ENCODE measurements at regions of chr3 and their contacts with region 1.

Region 1: GRCh38 chr3:176663837-176664831 is 533.1 kb downstream of the TBL1XR1 start:
- DNase-seq: no peak
- H3K4me3 ChIP-seq: no peak overlapping the region
- H3K27ac ChIP-seq: no peak overlapping the region
- H3K4me1 ChIP-seq: peaks cover 0 to 4% (median 0%) of the 10 kb centered on the region in 4 experiments; a peak in 2 of 7 replicates
- H3K27me3 ChIP-seq: no peaks in the 10 kb centered on the region
- CTCF ChIP-seq: peak in 2 of 3 experiments; percentile 7 to 33; a peak in 2 of 4 replicates
- EP300 ChIP-seq: no peak
- POLR2A ChIP-seq: no peak
- RAD21 ChIP-seq: peak; percentile 70 to 72

Region 2: DNA sequence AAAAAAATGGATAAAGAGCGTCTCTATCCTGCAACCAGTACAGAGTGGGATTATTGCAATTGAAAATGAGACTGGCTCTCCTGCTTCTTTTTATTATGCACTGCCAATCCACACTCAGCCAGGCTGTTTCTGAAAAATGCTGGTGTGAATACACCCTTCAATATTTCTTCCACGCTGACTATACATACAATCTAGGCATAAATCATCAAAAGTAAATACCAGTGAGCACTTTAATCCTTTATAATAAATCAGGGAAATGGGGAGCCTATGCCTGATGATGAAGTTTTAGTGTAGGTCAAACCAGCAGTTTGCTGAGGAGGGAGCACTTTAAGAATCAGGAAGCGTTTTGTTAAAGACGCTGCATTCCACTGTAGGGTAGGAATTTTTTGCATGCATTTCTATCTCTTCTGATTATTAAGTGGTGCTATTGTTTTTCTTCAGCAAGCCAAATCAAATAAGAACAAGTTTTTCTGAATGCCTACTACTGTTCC is 248.4 kb before region 1 on chr3:
- CTCF ChIA-PET with region 1: no interaction called
- POLR2A ChIA-PET with region 1: no interaction called
- DNase-seq: no peak
- H3K4me3 ChIP-seq: no peak overlapping the region
- H3K27ac ChIP-seq: no peak overlapping the region
- H3K4me1 ChIP-seq: peaks cover 0 to 5% (median 3%) of the 10 kb centered on the region in 4 experiments; a peak in 2 of 7 replicates
- H3K27me3 ChIP-seq: no peaks in the 10 kb centered on the region
- CTCF ChIP-seq: no peak
- EP300 ChIP-seq: no peak
- POLR2A ChIP-seq: no peak
- RAD21 ChIP-seq: no peak

Region 3: GRCh38 chr3:176514297-176514696 is 149.8 kb before region 1 on chr3:
- CTCF ChIA-PET with region 1: interaction called, 37 read pairs
- POLR2A ChIA-PET with region 1: no interaction called
- DNase-seq: peak; percentile 47 to 80
- H3K4me3 ChIP-seq: no peak overlapping the region
- H3K27ac ChIP-seq: no peak overlapping the region
- H3K4me1 ChIP-seq: peaks cover 0 to 7% (median 0%) of the 10 kb centered on the region in 4 experiments; a peak in 1 of 7 replicates
- H3K27me3 ChIP-seq: no peaks in the 10 kb centered on the region
- CTCF ChIP-seq: peak; percentile 45 to 81 (median 69)
- EP300 ChIP-seq: no peak
- POLR2A ChIP-seq: no peak
- RAD21 ChIP-seq: peak; percentile 97 to 98

Region 4: GRCh38 chr3:176650478-176650877 is 13.7 kb before region 1 on chr3:
- CTCF ChIA-PET with region 1: interaction called, 11 read pairs
- POLR2A ChIA-PET with region 1: no interaction called
- DNase-seq: no peak
- H3K4me3 ChIP-seq: no peak overlapping the region
- H3K27ac ChIP-seq: no peak overlapping the region
- H3K4me1 ChIP-seq: no peaks in the 10 kb centered on the region
- H3K27me3 ChIP-seq: no peaks in the 10 kb centered on the region
- CTCF ChIP-seq: peak in 1 of 3 experiments; percentile 19; a peak in 1 of 4 replicates
- EP300 ChIP-seq: no peak
- POLR2A ChIP-seq: no peak
- RAD21 ChIP-seq: no peak

Region 5: GRCh38 chr3:176755552-176755951 is 91.4 kb after region 1 on chr3:
- CTCF ChIA-PET with region 1: no interaction called
- POLR2A ChIA-PET with region 1: no interaction called
- DNase-seq: no peak
- H3K4me3 ChIP-seq: no peak overlapping the region
- H3K27ac ChIP-seq: no peak overlapping the region
- H3K4me1 ChIP-seq: no peaks in the 10 kb centered on the region
- H3K27me3 ChIP-seq: no peaks in the 10 kb centered on the region
- CTCF ChIP-seq: no peak
- EP300 ChIP-seq: no peak
- POLR2A ChIP-seq: no peak
- RAD21 ChIP-seq: no peak

Region 6: DNA sequence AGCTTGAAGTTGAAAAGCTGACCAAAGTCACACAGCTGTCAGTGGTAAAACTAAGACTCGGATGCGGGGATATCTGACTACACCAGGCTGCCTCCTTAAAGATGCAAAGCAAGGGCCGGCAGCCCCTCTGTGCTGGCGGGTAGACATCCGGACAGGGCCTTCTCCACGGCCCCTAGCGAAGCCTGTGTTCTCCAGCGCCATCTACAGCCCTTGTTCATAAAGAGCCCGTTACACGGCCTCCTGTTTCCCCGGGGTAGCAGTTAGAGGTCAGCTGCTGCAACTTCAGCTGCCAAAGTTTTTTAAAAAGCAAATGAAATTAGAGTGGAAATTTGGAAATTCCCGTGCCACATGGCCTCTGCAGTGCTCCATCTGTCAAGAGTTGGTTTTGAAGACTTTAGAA is 150.2 kb after region 1 on chr3:
- CTCF ChIA-PET with region 1: interaction called, 15 read pairs
- POLR2A ChIA-PET with region 1: no interaction called
- DNase-seq: peak; percentile 76 to 83
- H3K4me3 ChIP-seq: no peak overlapping the region
- H3K27ac ChIP-seq: no peak overlapping the region
- H3K4me1 ChIP-seq: no peaks in the 10 kb centered on the region
- H3K27me3 ChIP-seq: no peaks in the 10 kb centered on the region
- CTCF ChIP-seq: peak; percentile 71 to 84 (median 80)
- EP300 ChIP-seq: no peak
- POLR2A ChIP-seq: no peak
- RAD21 ChIP-seq: peak; percentile 72 to 87